Activated naive CD4-positive, alpha-beta T cell treated with anti-CD3 and anti-CD28 coated beads, Interleukin-2, amount 10 ng/mL, durations not matched to agents 7 days and 5 days (primary cell): ENCODE measurements at regions of chr16 and their contacts with region 1.

Region 1: DNA sequence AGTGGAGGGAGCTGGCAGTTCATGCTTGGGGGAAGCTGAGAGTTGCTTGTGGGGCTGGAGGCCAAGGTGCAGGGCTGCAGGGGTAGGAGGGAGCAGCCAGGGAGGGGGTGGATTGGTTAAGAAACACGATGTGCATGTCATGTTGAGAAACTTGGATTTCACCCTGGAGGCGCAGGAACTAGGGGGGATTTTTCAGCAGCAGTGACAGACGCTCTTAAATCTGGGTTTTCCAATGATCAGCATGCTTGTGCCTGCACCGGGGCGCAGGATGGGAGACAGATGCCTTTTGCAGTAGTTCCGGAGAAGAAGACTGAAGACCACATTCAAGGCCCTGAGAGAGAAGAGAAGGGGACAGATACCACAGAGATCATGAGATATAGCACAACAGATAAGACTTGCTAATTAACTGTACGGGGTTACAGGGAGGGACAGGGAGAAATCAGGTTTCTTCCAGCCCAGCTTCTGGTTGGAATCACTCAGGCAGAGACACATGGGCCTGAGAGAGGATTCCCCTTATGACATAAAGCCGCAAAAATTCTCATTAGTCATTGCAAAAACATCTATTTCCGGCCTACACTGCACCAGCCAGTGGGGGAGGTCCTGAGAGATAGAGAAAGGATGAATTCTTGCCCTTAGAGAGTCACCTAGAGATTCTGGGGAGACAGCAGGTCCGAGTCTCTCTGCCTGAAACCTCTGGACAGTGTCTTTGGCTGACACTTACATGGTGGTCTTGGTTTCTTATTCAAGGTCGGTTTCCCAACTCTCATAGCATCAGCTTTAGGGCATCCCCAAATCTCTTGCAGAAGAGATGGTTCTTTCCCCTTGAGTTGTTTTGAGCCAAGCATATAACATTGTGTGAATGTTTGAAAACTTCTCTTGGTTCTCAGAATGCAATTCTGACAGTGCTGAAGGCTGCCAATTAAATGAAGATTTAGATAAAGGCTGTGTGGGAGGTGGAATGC is 27.1 kb downstream of the CDH13 start:
- DNase-seq: peak; percentile 59
- H3K4me3 Mint-ChIP-seq: peak overlapping the region; percentile 25
- H3K27ac Mint-ChIP-seq: peak overlapping the region; percentile 92
- H3K4me1 Mint-ChIP-seq: peaks cover 95% of the 10 kb centered on the region
- H3K27me3 Mint-ChIP-seq: no peaks in the 10 kb centered on the region

Region 2: GRCh38 chr16:82639666-82640336 is 14.0 kb before region 1 on chr16:
- CTCF ChIA-PET with region 1: interaction called, 10 read pairs
- DNase-seq: peak; percentile 64
- H3K4me3 Mint-ChIP-seq: no peak overlapping the region
- H3K27ac Mint-ChIP-seq: no peak overlapping the region
- H3K4me1 Mint-ChIP-seq: peaks cover 7% of the 10 kb centered on the region
- H3K27me3 Mint-ChIP-seq: no peaks in the 10 kb centered on the region

Region 3: GRCh38 chr16:82728901-82729300 is 75.1 kb after region 1 on chr16:
- CTCF ChIA-PET with region 1: no interaction called
- DNase-seq: no peak
- H3K4me3 Mint-ChIP-seq: no peak overlapping the region
- H3K27ac Mint-ChIP-seq: no peak overlapping the region
- H3K4me1 Mint-ChIP-seq: peaks cover 4% of the 10 kb centered on the region
- H3K27me3 Mint-ChIP-seq: no peaks in the 10 kb centered on the region